ENCODE measurements at regions of chr1 and their contacts with region 1.

Region 1: GRCh38 chr1:45499415-45499769 is 481 bp downstream of the CCDC163 start:
- DNase-seq: peak in 1 of 9 experiments; percentile 55
- ATAC-seq: no peak
- H3K4me3 ChIP-seq: peak overlapping the region; percentile 59 to 83
- H3K4me3 Mint-ChIP-seq: peak overlapping the region; percentile 93
- H3K27ac ChIP-seq: peak overlapping the region; percentile 39 to 76
- H3K27ac Mint-ChIP-seq: peak overlapping the region; percentile 90
- H3K4me1 ChIP-seq: peaks cover 20% of the 10 kb centered on the region
- H3K4me1 Mint-ChIP-seq: peaks cover 37% of the 10 kb centered on the region
- H3K27me3 ChIP-seq: no peaks in the 10 kb centered on the region
- H3K27me3 Mint-ChIP-seq: no peaks in the 10 kb centered on the region
- CTCF ChIP-seq: no peak

Region 2: DNA sequence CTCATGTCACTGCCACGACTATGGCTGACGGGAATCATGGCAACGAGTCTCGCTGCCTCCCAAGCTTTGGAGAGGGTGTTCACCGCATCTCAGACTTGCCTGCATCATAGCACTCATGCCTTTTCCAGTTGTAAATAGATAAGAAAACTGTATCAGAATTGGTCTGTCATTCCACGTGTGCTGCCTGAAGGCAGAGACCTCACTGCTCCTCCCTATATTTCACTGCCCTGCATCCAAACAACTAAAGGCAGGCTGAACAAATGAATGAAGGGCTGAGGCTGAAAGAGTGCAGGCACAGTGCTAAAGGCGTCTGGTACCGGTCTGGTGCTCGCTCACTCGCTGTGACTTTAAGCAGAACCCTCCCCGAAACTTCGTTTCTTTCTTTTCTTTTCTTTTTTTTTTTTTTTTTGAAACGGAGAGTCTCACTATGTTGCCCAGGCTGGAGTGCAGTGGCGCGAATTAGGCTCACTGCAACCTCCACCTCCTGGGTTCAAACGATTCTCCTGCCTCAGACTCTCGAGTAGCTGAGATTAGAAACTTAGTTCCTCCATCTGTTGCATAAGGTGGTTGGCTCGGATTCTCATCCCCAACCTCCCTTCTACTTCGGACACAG is 513.5 kb before region 1 on chr1:
- CTCF ChIA-PET with region 1: no interaction called
- POLR2A ChIA-PET with region 1: no interaction called
- intact Hi-C with region 1: loop called in 1 of 2 experiments (anchors 1 kb)
- DNase-seq: no peak
- ATAC-seq: no peak
- H3K4me3 ChIP-seq: peak overlapping the region; percentile 70 to 85
- H3K4me3 Mint-ChIP-seq: peak overlapping the region; percentile 97
- H3K27ac ChIP-seq: peak overlapping the region; percentile 31 to 42
- H3K27ac Mint-ChIP-seq: peak overlapping the region; percentile 93
- H3K4me1 ChIP-seq: peaks cover 15% of the 10 kb centered on the region
- H3K4me1 Mint-ChIP-seq: peaks cover 30% of the 10 kb centered on the region
- H3K27me3 ChIP-seq: no peaks in the 10 kb centered on the region
- H3K27me3 Mint-ChIP-seq: no peaks in the 10 kb centered on the region
- CTCF ChIP-seq: no peak

Region 3: DNA sequence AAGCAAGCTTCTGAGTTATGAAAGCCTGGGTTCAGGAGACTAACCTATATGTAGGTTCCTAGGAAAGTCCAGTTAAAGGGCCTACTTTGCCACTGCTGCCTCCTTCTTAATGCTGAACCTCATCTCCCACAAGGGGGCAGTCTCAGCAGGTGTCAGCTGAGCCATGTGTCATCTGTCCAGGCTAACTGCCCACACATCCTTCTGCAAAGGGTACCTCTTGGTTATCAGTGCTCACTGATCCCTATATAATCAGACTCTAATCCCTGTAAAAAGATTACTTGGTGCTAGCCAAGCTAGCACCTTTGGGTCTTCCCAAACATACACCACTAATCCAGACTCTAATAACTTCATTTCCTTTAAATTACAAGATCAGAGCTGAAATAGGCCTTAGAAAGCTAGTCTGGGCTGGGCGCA is 13.3 kb after region 1 on chr1:
- CTCF ChIA-PET with region 1: interaction called, 24 read pairs
- POLR2A ChIA-PET with region 1: interaction called, 6 read pairs
- intact Hi-C with region 1: no loop called
- DNase-seq: peak in 8 of 9 experiments; percentile 35 to 77 (median 58)
- ATAC-seq: peak; percentile 65
- H3K4me3 ChIP-seq: no peak overlapping the region
- H3K4me3 Mint-ChIP-seq: no peak overlapping the region
- H3K27ac ChIP-seq: no peak overlapping the region
- H3K27ac Mint-ChIP-seq: peak overlapping the region; percentile 4
- H3K4me1 ChIP-seq: no peaks in the 10 kb centered on the region
- H3K4me1 Mint-ChIP-seq: peaks cover 2% of the 10 kb centered on the region
- H3K27me3 ChIP-seq: no peaks in the 10 kb centered on the region
- H3K27me3 Mint-ChIP-seq: no peaks in the 10 kb centered on the region
- CTCF ChIP-seq: peak; percentile 61

Region 4: GRCh38 chr1:45550401-45551351 is 51.3 kb after region 1 on chr1 and contains the start of gene AKR1A1:
- CTCF ChIA-PET with region 1: interaction called, 4 read pairs
- POLR2A ChIA-PET with region 1: interaction called, 5 read pairs
- intact Hi-C with region 1: loop called (anchors 1 kb)
- DNase-seq: peak; percentile 71 to 93 (median 83)
- ATAC-seq: peak; percentile 94
- H3K4me3 ChIP-seq: peak within 1 kb of the TSS; percentile 85 to 96
- H3K4me3 Mint-ChIP-seq: peak within 1 kb of the TSS; percentile 95
- H3K27ac ChIP-seq: peak within 1 kb of the TSS; percentile 76 to 91
- H3K27ac Mint-ChIP-seq: peak within 1 kb of the TSS; percentile 93
- H3K4me1 ChIP-seq: peaks cover 16% of the 10 kb centered on the region
- H3K4me1 Mint-ChIP-seq: peaks cover 23% of the 10 kb centered on the region
- H3K27me3 ChIP-seq: no peaks in the 10 kb centered on the region
- H3K27me3 Mint-ChIP-seq: no peaks in the 10 kb centered on the region
- CTCF ChIP-seq: no peak
- total RNA-seq, gene AKR1A1: 27.2 to 31.9 TPM

Region 5: DNA sequence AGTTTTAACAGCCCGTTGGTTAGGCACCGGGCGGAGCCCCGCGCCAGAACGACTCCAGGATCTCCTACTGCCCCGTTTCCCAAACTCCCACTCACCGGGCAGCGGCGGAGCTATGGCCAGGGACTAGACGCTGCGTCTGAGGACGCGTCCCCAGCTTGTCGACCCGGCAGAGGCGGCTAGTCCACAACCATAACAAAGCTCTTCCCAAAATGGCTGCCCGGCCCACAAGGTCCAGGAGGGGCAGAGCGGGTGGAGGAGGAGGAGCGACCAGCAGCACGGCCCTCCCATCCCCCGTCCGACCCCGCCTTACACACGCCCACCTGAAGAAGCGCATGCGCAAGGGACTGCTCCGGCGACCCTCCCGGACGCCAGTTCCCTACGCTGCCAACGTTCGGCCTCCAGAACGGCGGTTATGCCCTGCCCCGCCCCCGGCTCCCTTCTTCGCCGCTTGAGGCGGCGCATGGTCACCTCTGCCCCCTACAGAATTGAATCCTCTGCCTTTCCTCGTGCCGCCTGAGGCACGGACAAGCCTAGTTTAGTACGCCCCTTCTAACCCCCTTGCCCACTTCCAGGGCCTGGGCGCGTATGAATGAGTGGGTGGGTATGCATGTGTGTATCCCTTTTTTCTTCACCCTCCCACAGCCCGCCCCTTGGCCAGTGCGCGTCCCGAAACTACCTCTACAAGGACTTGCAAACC is 187.1 kb after region 1 on chr1 and contains the start of gene GPBP1L1:
- CTCF ChIA-PET with region 1: no interaction called
- POLR2A ChIA-PET with region 1: interaction called, 5 read pairs
- intact Hi-C with region 1: loop called in 1 of 2 experiments (anchors 1 kb)
- DNase-seq: peak; percentile 95 to 98 (median 98)
- ATAC-seq: peak; percentile 72
- H3K4me3 ChIP-seq: peak within 1 kb of the TSS; percentile 99
- H3K4me3 Mint-ChIP-seq: peak within 1 kb of the TSS; percentile 97
- H3K27ac ChIP-seq: peak within 1 kb of the TSS; percentile 84 to 92
- H3K27ac Mint-ChIP-seq: peak within 1 kb of the TSS; percentile 100
- H3K4me1 ChIP-seq: peaks cover 39% of the 10 kb centered on the region
- H3K4me1 Mint-ChIP-seq: peaks cover 59% of the 10 kb centered on the region
- H3K27me3 ChIP-seq: no peaks in the 10 kb centered on the region
- H3K27me3 Mint-ChIP-seq: no peaks in the 10 kb centered on the region
- CTCF ChIP-seq: no peak
- total RNA-seq, gene GPBP1L1: 125 to 128 TPM

Measured in CD8-positive, alpha-beta T cell (primary cell).